ENCODE measurements at regions of chr13 and their contacts with region 1.

Region 1: DNA sequence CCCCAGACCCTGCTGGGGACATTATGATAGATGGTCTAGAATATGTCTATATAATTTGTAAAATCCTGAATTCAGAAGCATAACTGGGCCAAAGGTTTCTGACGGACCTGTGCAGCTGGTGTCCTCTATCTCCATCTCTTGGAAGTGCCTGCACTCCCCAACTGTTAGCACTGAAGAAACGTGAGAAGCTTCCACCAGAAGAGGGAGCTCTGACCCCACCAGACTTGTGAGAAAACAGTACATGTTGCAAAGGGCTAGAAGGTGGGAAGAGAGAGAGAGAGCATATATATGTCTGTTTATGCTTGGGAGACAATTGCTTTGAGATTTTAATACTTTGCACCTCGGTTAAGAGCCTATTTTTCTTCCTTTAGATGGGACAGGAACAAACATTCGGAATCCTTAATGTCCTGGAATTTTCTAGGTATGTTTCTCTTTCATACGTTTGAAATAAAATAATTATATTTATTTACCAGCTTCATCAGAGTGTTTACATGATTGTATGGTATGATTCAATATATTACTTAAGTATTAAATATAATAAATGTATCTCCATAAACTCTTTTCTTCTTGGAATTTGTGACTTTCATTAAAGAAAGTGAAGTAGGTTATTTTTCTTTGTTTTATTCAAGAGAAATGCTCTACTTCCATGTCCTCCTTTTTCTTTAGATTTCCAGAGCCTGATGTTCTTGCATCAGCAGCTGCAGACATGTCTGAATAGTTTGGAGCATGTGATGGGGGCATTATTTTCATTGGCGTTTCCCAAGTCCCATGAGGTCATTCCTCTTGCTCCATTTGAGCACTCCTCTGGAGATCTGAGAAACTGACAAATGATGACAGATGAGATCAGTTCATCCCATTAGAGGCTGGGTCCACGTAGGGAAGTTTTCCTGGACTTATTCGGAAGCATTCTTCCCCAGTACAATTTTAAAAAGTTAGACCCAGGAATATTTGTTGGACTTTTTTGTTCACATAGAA is 202.9 kb downstream of the ATP8A2 start:
- DNase-seq: peak in 1 of 2 donors; percentile 67
- ATAC-seq: peak; percentile 67
- H3K4me3 ChIP-seq: no peak overlapping the region
- H3K27ac ChIP-seq: no peak overlapping the region
- H3K4me1 ChIP-seq: no peaks in the 10 kb centered on the region
- H3K27me3 ChIP-seq: no peaks in the 10 kb centered on the region

Region 2: DNA sequence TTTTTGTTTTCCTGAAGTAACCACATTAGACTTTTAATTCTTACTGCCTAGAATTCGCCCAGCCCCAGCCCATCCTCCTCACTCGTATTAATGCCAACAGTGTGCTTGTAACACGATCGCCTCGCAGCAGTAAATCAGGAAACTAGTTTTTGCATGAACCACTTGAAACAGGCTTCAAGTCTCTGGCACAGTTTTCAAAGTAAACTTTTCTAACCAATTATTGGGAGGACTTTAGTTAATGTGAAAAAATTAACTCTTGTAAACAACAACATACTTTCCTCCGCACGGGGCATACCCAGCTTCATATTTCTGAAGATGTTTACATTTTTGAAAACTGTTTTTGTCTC is 1965.3 kb before region 1 on chr13:
- intact Hi-C with region 1: no loop called
- DNase-seq: no peak
- ATAC-seq: peak; percentile 64
- H3K4me3 ChIP-seq: no peak overlapping the region
- H3K27ac ChIP-seq: no peak overlapping the region
- H3K4me1 ChIP-seq: peaks cover 0 to 2% of the 10 kb centered on the region in 2 donors
- H3K27me3 ChIP-seq: no peaks in the 10 kb centered on the region

Region 3: DNA sequence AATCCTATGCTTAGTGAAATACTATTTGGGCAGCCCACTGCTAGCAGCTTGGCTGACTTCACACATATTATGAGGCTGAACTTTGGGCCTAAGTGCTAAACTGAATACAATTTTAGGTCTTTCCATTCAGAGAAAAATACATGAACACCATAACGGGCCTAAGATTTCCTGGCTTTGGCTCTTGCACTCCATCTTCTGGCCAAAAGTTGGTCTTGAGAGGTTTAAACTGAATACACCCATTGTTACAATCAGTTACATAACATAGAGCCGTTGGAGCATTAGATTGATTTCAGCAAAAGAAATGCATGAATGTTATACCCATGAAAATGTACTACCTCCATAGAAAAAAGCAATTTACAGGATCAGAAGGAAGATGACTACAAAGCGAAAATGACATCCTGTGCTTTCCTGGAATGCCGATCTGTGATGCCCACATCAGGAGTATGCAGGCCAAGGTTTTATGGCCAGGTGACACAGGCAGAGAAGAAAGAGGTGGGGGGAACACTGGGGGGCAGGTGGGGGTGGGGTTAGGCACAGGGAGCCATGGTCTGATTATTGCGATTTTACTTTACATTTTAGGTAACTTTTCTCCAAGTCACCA is 488.2 kb after region 1 on chr13:
- intact Hi-C with region 1: loop called (anchors 2 to 5 kb)
- DNase-seq: no peak
- ATAC-seq: peak; percentile 66
- H3K4me3 ChIP-seq: no peak overlapping the region
- H3K27ac ChIP-seq: no peak overlapping the region
- H3K4me1 ChIP-seq: no peaks in the 10 kb centered on the region
- H3K27me3 ChIP-seq: no peaks in the 10 kb centered on the region

Measured in aorta (tissue), 5 donors.